Heart right ventricle (tissue), 16 donors: ENCODE measurements at regions of chr1 and their contacts with region 1.

Region 1: GRCh38 chr1:185426848-185427247 is 109.8 kb upstream of the IVNS1ABP start:
- DNase-seq: peak; percentile 15 to 57
- ATAC-seq: peak; percentile 74 to 89 (median 86)
- H3K4me3 ChIP-seq: no peak overlapping the region
- H3K27ac ChIP-seq: peak overlapping the region in 8 of 10 donors; percentile 7 to 85 (median 70)
- H3K4me1 ChIP-seq: peaks cover 0 to 19% (median 11%) of the 10 kb centered on the region in 9 donors
- H3K27me3 ChIP-seq: no peaks in the 10 kb centered on the region
- CTCF ChIP-seq: peak in 3 of 9 donors; percentile 13 to 37 (median 26)

Region 2: GRCh38 chr1:185317034-185317885 is 109.6 kb before region 1 on chr1 and contains the start of gene IVNS1ABP:
- intact Hi-C with region 1: loop called in 2 of 10 experiments (anchors 5 to 10 kb)
- DNase-seq: peak; percentile 95
- ATAC-seq: peak; percentile 88 to 95 (median 91)
- H3K4me3 ChIP-seq: peak within 1 kb of the TSS; percentile 85 to 99 (median 92)
- H3K27ac ChIP-seq: peak within 1 kb of the TSS; percentile 90 to 99 (median 96)
- H3K4me1 ChIP-seq: peaks cover 3 to 49% (median 44%) of the 10 kb centered on the region in 9 donors
- H3K27me3 ChIP-seq: no peaks in the 10 kb centered on the region
- CTCF ChIP-seq: peak in 5 of 9 donors; percentile 10 to 43 (median 25)
- total RNA-seq, gene IVNS1ABP: 44.7 to 132 (median 66.7) TPM

Region 3: GRCh38 chr1:185325413-185325812 is 101.4 kb before region 1 on chr1:
- intact Hi-C with region 1: loop called in 1 of 10 experiments (anchors 10 kb)
- DNase-seq: no peak
- ATAC-seq: no peak
- H3K4me3 ChIP-seq: no peak overlapping the region
- H3K27ac ChIP-seq: no peak overlapping the region
- H3K4me1 ChIP-seq: no peaks in the 10 kb centered on the region
- H3K27me3 ChIP-seq: no peaks in the 10 kb centered on the region
- CTCF ChIP-seq: no peak

Region 4: GRCh38 chr1:185477638-185478580 is 51.1 kb after region 1 on chr1:
- intact Hi-C with region 1: no loop called
- DNase-seq: no peak
- ATAC-seq: no peak
- H3K4me3 ChIP-seq: no peak overlapping the region
- H3K27ac ChIP-seq: no peak overlapping the region
- H3K4me1 ChIP-seq: peaks cover 0 to 12% (median 0%) of the 10 kb centered on the region in 9 donors
- H3K27me3 ChIP-seq: no peaks in the 10 kb centered on the region
- CTCF ChIP-seq: no peak

Region 5: GRCh38 chr1:185663332-185663731 is 236.5 kb after region 1 on chr1:
- intact Hi-C with region 1: loop called in 1 of 10 experiments (anchors 10 kb)
- DNase-seq: no peak
- ATAC-seq: no peak
- H3K4me3 ChIP-seq: no peak overlapping the region
- H3K27ac ChIP-seq: no peak overlapping the region
- H3K4me1 ChIP-seq: peaks cover 0 to 13% (median 5%) of the 10 kb centered on the region in 9 donors
- H3K27me3 ChIP-seq: no peaks in the 10 kb centered on the region
- CTCF ChIP-seq: no peak

Region 6: GRCh38 chr1:185681034-185681633 is 254.3 kb after region 1 on chr1:
- intact Hi-C with region 1: loop called in 5 of 10 experiments (anchors 5 to 10 kb)
- DNase-seq: peak in 1 of 2 donors; percentile 41
- ATAC-seq: peak in 6 of 8 donors; percentile 54 to 77 (median 75)
- H3K4me3 ChIP-seq: no peak overlapping the region
- H3K27ac ChIP-seq: peak overlapping the region in 3 of 10 donors; percentile 28 to 50 (median 46)
- H3K4me1 ChIP-seq: peaks cover 0 to 37% (median 21%) of the 10 kb centered on the region in 9 donors
- H3K27me3 ChIP-seq: no peaks in the 10 kb centered on the region
- CTCF ChIP-seq: peak; percentile 43 to 84 (median 67)